MCF 10A (cell line): ENCODE measurements at regions of chr13 and their contacts with region 1.

Region 1: DNA sequence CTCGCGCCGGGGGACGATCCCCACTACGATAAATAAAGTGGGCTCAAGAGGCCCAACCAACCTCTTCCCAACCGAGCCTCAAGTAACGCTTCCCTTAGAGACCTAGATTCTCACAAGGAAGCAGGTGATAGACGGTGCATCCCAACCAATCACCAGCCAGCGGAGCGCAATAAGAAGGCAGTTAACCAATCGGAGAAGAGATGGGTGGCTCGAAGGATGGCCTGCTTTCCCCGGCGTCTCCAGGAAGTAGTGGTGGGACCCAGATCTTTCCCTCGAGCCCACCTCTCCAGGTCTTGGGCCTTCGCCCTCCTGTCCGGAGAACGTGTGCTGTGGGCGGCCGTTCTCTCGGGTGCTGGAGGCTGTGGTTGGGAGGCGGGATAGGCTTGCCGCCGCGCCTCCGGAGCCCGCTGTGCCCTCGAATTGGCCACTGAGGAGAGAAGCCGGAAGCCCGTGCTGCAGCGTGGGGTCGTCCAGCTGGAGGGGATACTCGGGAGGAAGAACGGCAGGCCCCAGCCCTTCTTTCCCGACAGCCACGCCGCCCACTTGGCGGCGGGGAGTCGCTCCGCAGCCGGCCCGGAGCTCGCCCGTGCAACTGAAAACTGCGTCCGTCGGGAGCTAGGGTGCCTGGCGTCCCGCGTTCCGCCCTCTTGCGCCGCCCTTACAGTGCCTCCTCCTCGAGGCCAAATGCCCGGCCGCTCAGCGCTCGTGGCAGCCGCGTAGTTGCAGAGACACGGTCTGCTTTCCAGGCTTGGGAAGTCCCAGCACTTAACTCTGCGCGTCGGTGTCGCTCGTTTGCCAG is at the start of gene RNF6:
- DNase-seq: peak; percentile 98
- H3K4me3 Mint-ChIP-seq: peak within 1 kb of the TSS; percentile 99
- H3K27ac Mint-ChIP-seq: peak within 1 kb of the TSS; percentile 99
- H3K4me1 Mint-ChIP-seq: peaks cover 20% of the 10 kb centered on the region
- H3K27me3 Mint-ChIP-seq: no peaks in the 10 kb centered on the region
- CTCF ChIP-seq: no peak
- total RNA-seq, gene RNF6: 81.9 and 86.7 TPM in 2 replicates

Region 2: DNA sequence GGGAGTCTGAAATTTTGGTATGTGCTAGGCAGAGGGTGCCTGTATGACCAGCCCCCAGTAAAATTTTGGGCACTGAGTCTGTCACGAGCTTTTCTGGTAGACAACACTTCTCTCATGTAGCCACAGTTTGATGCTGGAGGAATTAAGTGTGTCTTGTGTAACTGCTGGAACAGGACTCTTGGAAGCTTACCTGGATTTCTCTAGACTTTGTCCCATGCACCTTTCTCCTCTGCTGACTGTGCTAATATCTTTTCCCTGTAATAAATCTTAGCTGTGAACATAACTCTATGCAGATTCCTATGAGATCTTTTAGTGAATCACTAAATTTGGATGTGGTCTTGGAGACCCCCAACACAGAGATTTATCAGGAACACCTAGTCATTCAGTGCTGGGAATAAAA is 13.6 kb before region 1 on chr13:
- CTCF ChIA-PET with region 1: interaction called, 4 read pairs
- POLR2A ChIA-PET with region 1: interaction called, 17 read pairs
- intact Hi-C with region 1: no loop called
- DNase-seq: no peak
- H3K4me3 Mint-ChIP-seq: no peak overlapping the region
- H3K27ac Mint-ChIP-seq: no peak overlapping the region
- H3K4me1 Mint-ChIP-seq: no peaks in the 10 kb centered on the region
- H3K27me3 Mint-ChIP-seq: no peaks in the 10 kb centered on the region
- CTCF ChIP-seq: no peak

Region 3: GRCh38 chr13:26236296-26236695 is 14.4 kb after region 1 on chr13:
- CTCF ChIA-PET with region 1: interaction called, 4 read pairs
- POLR2A ChIA-PET with region 1: interaction called, 14 read pairs
- intact Hi-C with region 1: no loop called
- DNase-seq: no peak
- H3K4me3 Mint-ChIP-seq: no peak overlapping the region
- H3K27ac Mint-ChIP-seq: no peak overlapping the region
- H3K4me1 Mint-ChIP-seq: no peaks in the 10 kb centered on the region
- H3K27me3 Mint-ChIP-seq: peaks cover 24% of the 10 kb centered on the region
- CTCF ChIP-seq: no peak

Region 4: DNA sequence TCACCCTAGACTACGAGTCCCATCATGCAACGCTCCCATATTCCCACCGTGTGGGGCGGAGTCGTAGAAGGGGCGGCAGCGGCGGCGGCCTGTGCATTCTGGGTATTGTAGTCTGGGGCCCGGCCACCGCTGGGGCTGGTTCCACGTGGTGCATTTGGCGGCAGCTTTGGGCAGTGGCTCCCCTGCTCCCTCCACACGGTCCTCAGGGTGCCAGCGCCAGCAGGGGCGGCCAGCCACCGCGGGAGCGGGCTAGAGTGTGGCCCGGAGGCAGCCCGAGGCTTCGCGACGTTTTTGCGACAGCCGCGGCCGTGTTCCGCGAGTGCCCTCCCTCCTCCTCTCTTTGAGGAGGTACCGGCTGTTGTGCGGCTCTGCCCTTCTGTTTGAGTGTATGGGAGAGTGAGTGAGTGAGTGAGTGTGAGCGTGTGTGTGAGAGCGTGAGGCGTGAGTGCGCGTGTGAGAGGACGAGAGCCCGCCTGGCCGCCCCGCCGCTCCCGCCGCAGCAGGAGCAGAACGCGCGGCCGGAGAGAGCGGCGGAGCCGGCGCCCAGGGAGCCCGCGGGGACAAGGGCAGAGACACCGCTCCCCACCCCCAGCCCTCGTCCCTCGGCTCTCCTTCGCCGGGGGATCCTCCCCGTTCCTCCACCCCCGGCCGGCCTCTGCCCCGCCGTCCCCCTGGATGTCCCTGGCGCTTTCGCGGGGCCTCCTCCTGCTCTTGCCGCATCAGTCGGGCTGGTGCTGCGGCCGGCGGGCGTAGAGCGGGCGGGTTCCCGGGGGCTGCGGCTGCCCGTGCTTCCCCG is 32.1 kb after region 1 on chr13 and contains the start of gene CDK8:
- CTCF ChIA-PET with region 1: interaction called, 4 read pairs
- POLR2A ChIA-PET with region 1: interaction called, 48 read pairs
- intact Hi-C with region 1: loop called (anchors 1 kb)
- DNase-seq: peak; percentile 90
- H3K4me3 Mint-ChIP-seq: peak within 1 kb of the TSS; percentile 80
- H3K27ac Mint-ChIP-seq: peak within 1 kb of the TSS; percentile 67
- H3K4me1 Mint-ChIP-seq: peaks cover 18% of the 10 kb centered on the region
- H3K27me3 Mint-ChIP-seq: no peaks in the 10 kb centered on the region
- CTCF ChIP-seq: no peak
- total RNA-seq, gene CDK8: 20.6 and 22.2 TPM in 2 replicates

Region 5: DNA sequence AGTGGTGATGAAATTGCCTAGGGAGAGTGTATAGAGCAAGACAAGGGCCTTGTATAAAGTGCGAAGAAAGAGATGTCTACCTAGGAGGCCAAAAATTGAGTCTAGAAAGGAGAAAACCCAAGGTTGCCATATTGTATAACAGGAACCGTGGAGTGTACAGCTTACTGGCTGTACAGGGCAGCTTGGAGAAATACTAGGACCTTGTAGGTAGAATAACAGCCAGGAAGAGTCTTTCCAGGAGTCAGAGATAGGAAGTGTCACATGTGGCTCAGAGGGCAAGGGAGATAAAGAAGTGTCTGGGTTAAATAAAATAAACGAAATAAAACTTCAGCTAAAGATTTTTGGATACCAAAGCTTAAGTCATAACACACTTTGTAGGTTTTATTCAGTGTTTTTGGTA is 44.4 kb after region 1 on chr13:
- CTCF ChIA-PET with region 1: no interaction called
- POLR2A ChIA-PET with region 1: interaction called, 11 read pairs
- intact Hi-C with region 1: no loop called
- DNase-seq: no peak
- H3K4me3 Mint-ChIP-seq: no peak overlapping the region
- H3K27ac Mint-ChIP-seq: no peak overlapping the region
- H3K4me1 Mint-ChIP-seq: peaks cover 26% of the 10 kb centered on the region
- H3K27me3 Mint-ChIP-seq: no peaks in the 10 kb centered on the region
- CTCF ChIP-seq: no peak

Region 6: GRCh38 chr13:26557393-26558023 is 335.6 kb after region 1 on chr13 and contains the start of gene WASF3:
- CTCF ChIA-PET with region 1: no interaction called
- POLR2A ChIA-PET with region 1: interaction called, 20 read pairs
- intact Hi-C with region 1: no loop called
- DNase-seq: peak; percentile 93
- H3K4me3 Mint-ChIP-seq: peak within 1 kb of the TSS; percentile 79
- H3K27ac Mint-ChIP-seq: no peak within 1 kb of the TSS
- H3K4me1 Mint-ChIP-seq: peaks cover 15% of the 10 kb centered on the region
- H3K27me3 Mint-ChIP-seq: peaks cover 11% of the 10 kb centered on the region
- CTCF ChIP-seq: no peak
- total RNA-seq, gene WASF3: 21.8 and 24.0 TPM in 2 replicates